ENCODE measurements at regions of chr2 and their contacts with region 1.

Region 1: DNA sequence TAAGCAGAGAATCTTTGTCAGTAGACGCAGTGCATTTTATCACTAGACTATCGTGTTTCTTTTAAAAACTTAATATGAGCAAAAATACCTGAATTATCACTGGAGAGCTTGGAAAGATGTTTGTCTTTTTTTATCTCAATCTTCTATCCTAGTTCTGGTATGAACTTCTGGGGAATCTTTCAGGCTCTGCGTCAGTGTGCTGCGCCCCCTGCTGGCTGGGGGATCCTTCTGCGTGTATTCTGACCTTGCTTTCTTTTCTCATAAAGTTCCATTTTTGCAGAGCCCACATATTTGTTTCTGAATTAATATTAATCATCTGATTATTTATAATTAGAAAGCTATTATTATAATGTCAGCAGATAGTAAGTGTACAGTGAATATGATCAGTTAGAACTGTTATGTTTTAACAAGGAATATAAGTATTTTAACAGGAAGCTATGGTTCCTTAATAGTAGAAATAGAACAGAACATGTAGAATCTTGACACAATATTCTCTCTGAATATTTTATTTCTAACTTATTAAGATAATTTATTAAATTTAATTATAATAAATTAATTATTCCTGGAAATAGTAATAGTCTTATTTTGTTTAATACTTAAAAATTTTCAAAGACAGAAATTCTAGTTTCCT is 945.0 kb upstream of the CRIM1 start:
- DNase-seq: no peak
- ATAC-seq: no peak
- H3K4me3 ChIP-seq: no peak overlapping the region
- H3K27ac ChIP-seq: no peak overlapping the region
- H3K4me1 ChIP-seq: no peaks in the 10 kb centered on the region
- H3K27me3 ChIP-seq: no peaks in the 10 kb centered on the region
- CTCF ChIP-seq: peak in 2 of 3 experiments; percentile 77 to 82; a peak in 4 of 6 replicates
- POLR2A ChIP-seq: no peak
- RAD21 ChIP-seq: peak; percentile 35; the same call in 1 of the 2 replicates

Region 2: GRCh38 chr2:33673937-33674336 is 1736.6 kb before region 1 on chr2:
- CTCF ChIA-PET with region 1: interaction called, 5 read pairs
- POLR2A ChIA-PET with region 1: no interaction called
- RAD21 ChIA-PET with region 1: no interaction called
- intact Hi-C with region 1: loop called (anchors 5 kb)
- DNase-seq: peak; percentile 13
- ATAC-seq: peak; percentile 43; the same call in 1 of the 2 replicates
- H3K4me3 ChIP-seq: no peak overlapping the region
- H3K27ac ChIP-seq: no peak overlapping the region
- H3K4me1 ChIP-seq: no peaks in the 10 kb centered on the region
- H3K27me3 ChIP-seq: no peaks in the 10 kb centered on the region; the same call in 1 of the 2 replicates
- CTCF ChIP-seq: peak; percentile 16 to 60 (median 21); a peak in 3 of 6 replicates
- POLR2A ChIP-seq: no peak
- RAD21 ChIP-seq: peak; percentile 59

Region 3: GRCh38 chr2:36351736-36352349 is 941.3 kb after region 1 on chr2:
- CTCF ChIA-PET with region 1: no interaction called
- POLR2A ChIA-PET with region 1: no interaction called
- RAD21 ChIA-PET with region 1: no interaction called
- intact Hi-C with region 1: no loop called
- DNase-seq: peak; percentile 65
- ATAC-seq: 0 out of 2 replicates have a peak, but pooled peaks have one; percentile 6
- H3K4me3 ChIP-seq: no peak overlapping the region
- H3K27ac ChIP-seq: no peak overlapping the region
- H3K4me1 ChIP-seq: peaks cover 4 to 22% of the 10 kb centered on the region in 2 experiments; a peak in 3 of 4 replicates
- H3K27me3 ChIP-seq: no peaks in the 10 kb centered on the region
- CTCF ChIP-seq: peak; percentile 53 to 58 (median 54)
- POLR2A ChIP-seq: no peak
- RAD21 ChIP-seq: peak; percentile 77

Measured in HCT116 (cell line).